ENCODE measurements at regions of chr2 and their contacts with region 1.

Region 1: GRCh38 chr2:46954948-46955571 is 39.5 kb upstream of the MCFD2 start:
- DNase-seq: peak; percentile 85 to 94
- H3K4me3 ChIP-seq: no peak overlapping the region
- H3K4me3 Mint-ChIP-seq: peak overlapping the region; percentile 57
- H3K27ac Mint-ChIP-seq: peak overlapping the region; percentile 94
- H3K4me1 ChIP-seq: peaks cover 31% of the 10 kb centered on the region
- H3K4me1 Mint-ChIP-seq: peaks cover 26% of the 10 kb centered on the region
- H3K27me3 ChIP-seq: no peaks in the 10 kb centered on the region
- H3K27me3 Mint-ChIP-seq: no peaks in the 10 kb centered on the region
- CTCF ChIP-seq: no peak

Region 2: DNA sequence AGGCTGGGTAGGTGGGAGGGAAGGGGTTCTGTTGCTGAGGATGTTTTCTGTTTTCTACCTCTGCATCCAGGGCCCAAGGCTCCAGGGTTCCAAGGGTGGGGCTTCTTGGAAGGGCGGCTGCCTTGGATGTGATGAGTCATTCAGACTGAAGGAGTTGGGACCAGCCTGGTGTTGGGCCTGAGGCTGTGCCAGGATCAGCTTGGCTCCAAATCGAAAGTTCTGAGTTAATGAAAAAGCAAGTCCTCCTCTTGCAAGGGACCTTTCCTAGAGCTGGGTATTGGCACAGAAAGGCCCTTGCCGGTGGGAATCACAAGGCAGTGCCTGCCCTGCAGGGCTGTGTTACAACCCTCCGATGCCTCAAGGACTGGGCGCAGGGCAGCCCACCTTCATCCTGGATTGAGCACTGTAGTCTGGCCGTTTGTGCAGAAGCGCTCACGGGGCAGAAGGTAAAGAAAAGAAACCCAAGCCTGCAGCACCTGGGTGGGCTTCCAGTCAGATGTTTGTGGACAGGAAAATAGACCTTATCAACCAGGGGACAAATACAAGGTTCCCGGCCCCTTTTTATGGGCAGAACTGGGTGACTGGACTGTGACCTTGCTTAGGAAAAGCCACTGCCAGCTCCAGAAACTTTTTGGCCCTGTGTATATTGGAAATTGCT is 13.1 kb after region 1 on chr2:
- CTCF ChIA-PET with region 1: interaction called, 3 read pairs
- POLR2A ChIA-PET with region 1: no interaction called
- intact Hi-C with region 1: loop called (anchors 1 kb)
- DNase-seq: peak in 1 of 2 experiments; percentile 36
- H3K4me3 ChIP-seq: no peak overlapping the region
- H3K4me3 Mint-ChIP-seq: no peak overlapping the region
- H3K27ac Mint-ChIP-seq: peak overlapping the region; percentile 80
- H3K4me1 ChIP-seq: peaks cover 45% of the 10 kb centered on the region
- H3K4me1 Mint-ChIP-seq: peaks cover 32% of the 10 kb centered on the region
- H3K27me3 ChIP-seq: no peaks in the 10 kb centered on the region
- H3K27me3 Mint-ChIP-seq: no peaks in the 10 kb centered on the region
- CTCF ChIP-seq: no peak

Region 3: GRCh38 chr2:47094511-47095142 is 139.6 kb after region 1 on chr2:
- CTCF ChIA-PET with region 1: no interaction called
- POLR2A ChIA-PET with region 1: no interaction called
- intact Hi-C with region 1: no loop called
- DNase-seq: no peak
- H3K4me3 ChIP-seq: no peak overlapping the region
- H3K4me3 Mint-ChIP-seq: no peak overlapping the region
- H3K27ac Mint-ChIP-seq: no peak overlapping the region
- H3K4me1 ChIP-seq: peaks cover 8% of the 10 kb centered on the region
- H3K4me1 Mint-ChIP-seq: peaks cover 15% of the 10 kb centered on the region
- H3K27me3 ChIP-seq: no peaks in the 10 kb centered on the region
- H3K27me3 Mint-ChIP-seq: no peaks in the 10 kb centered on the region
- CTCF ChIP-seq: no peak

Region 4: GRCh38 chr2:47386551-47386950 is 431.5 kb after region 1 on chr2:
- CTCF ChIA-PET with region 1: no interaction called
- POLR2A ChIA-PET with region 1: no interaction called
- intact Hi-C with region 1: no loop called
- DNase-seq: no peak
- H3K4me3 ChIP-seq: no peak overlapping the region
- H3K4me3 Mint-ChIP-seq: no peak overlapping the region
- H3K27ac Mint-ChIP-seq: no peak overlapping the region
- H3K4me1 ChIP-seq: no peaks in the 10 kb centered on the region
- H3K4me1 Mint-ChIP-seq: no peaks in the 10 kb centered on the region
- H3K27me3 ChIP-seq: no peaks in the 10 kb centered on the region
- H3K27me3 Mint-ChIP-seq: no peaks in the 10 kb centered on the region
- CTCF ChIP-seq: no peak